Naive thymus-derived CD4-positive, alpha-beta T cell (primary cell): ENCODE measurements at regions of chr11 and their contacts with region 1.

Region 1: GRCh38 chr11:106087815-106088435 is 10.5 kb downstream of the AASDHPPT start:
- DNase-seq: peak in 8 of 9 donors; percentile 10 to 32 (median 18)
- ATAC-seq: peak; percentile 82
- H3K4me3 ChIP-seq: no peak overlapping the region
- H3K4me3 Mint-ChIP-seq: peak overlapping the region in 6 of 10 donors; percentile 5 to 66 (median 43)
- H3K27ac ChIP-seq: no peak overlapping the region
- H3K27ac Mint-ChIP-seq: peak overlapping the region in 2 of 9 donors; percentile 20 to 26
- H3K4me1 ChIP-seq: peaks cover 9 to 10% of the 10 kb centered on the region in 2 donors
- H3K4me1 Mint-ChIP-seq: peaks cover 32 to 71% (median 58%) of the 10 kb centered on the region in 7 donors
- H3K27me3 ChIP-seq: no peaks in the 10 kb centered on the region
- H3K27me3 Mint-ChIP-seq: no peaks in the 10 kb centered on the region

Region 2: GRCh38 chr11:105799728-105800462 is 288.0 kb before region 1 on chr11:
- CTCF ChIA-PET with region 1: no interaction called
- POLR2A ChIA-PET with region 1: no interaction called
- intact Hi-C with region 1: no loop called
- DNase-seq: no peak
- ATAC-seq: no peak
- H3K4me3 ChIP-seq: no peak overlapping the region
- H3K4me3 Mint-ChIP-seq: no peak overlapping the region
- H3K27ac ChIP-seq: no peak overlapping the region
- H3K27ac Mint-ChIP-seq: no peak overlapping the region
- H3K4me1 ChIP-seq: no peaks in the 10 kb centered on the region
- H3K4me1 Mint-ChIP-seq: no peaks in the 10 kb centered on the region
- H3K27me3 ChIP-seq: no peaks in the 10 kb centered on the region
- H3K27me3 Mint-ChIP-seq: no peaks in the 10 kb centered on the region

Region 3: GRCh38 chr11:106133529-106133928 is 45.6 kb after region 1 on chr11:
- CTCF ChIA-PET with region 1: no interaction called
- POLR2A ChIA-PET with region 1: no interaction called
- intact Hi-C with region 1: no loop called
- DNase-seq: no peak
- ATAC-seq: no peak
- H3K4me3 ChIP-seq: no peak overlapping the region
- H3K4me3 Mint-ChIP-seq: no peak overlapping the region
- H3K27ac ChIP-seq: no peak overlapping the region
- H3K27ac Mint-ChIP-seq: no peak overlapping the region
- H3K4me1 ChIP-seq: no peaks in the 10 kb centered on the region
- H3K4me1 Mint-ChIP-seq: no peaks in the 10 kb centered on the region
- H3K27me3 ChIP-seq: no peaks in the 10 kb centered on the region
- H3K27me3 Mint-ChIP-seq: peaks cover 0 to 49% (median 26%) of the 10 kb centered on the region in 5 donors

Region 4: DNA sequence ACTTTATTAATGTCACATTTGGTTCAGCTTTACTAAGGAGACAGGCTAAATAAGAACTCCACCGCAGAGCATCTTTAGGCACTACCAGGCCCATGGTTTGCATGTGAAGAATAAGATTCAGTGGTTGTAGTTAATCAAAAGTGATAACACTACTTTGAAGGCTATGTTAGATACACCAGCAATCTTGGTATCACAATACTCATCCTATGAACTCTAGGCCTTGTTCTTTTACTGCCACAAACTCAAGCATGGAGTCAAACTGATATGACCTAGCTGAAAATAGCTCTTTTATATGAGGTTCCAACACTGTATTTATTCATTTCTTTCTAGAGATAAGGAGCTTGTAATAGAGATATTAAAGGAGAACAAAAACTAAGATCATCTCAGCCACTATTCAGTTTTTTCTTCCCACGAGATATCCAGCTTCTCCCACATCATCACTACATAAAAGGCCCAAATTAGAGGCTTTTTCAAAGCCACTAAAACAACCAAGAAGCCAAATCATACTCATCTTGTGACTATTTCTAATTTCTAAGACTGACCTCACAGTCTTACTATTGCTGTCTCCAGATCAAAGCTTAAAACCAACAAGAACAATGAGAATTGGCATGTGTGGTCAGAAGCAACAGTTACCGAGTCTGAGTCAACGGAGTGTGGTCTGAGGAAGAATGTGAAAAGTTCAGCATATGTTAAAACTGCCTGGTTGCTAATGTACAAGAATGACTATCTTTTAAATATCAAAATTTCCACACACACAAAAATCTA is 955.5 kb after region 1 on chr11:
- CTCF ChIA-PET with region 1: no interaction called
- POLR2A ChIA-PET with region 1: no interaction called
- intact Hi-C with region 1: loop called in 1 of 2 experiments (anchors 5 kb)
- DNase-seq: no peak
- ATAC-seq: no peak
- H3K4me3 ChIP-seq: no peak overlapping the region
- H3K4me3 Mint-ChIP-seq: no peak overlapping the region
- H3K27ac ChIP-seq: no peak overlapping the region
- H3K27ac Mint-ChIP-seq: no peak overlapping the region
- H3K4me1 ChIP-seq: no peaks in the 10 kb centered on the region
- H3K4me1 Mint-ChIP-seq: no peaks in the 10 kb centered on the region
- H3K27me3 ChIP-seq: no peaks in the 10 kb centered on the region
- H3K27me3 Mint-ChIP-seq: no peaks in the 10 kb centered on the region

Region 5: DNA sequence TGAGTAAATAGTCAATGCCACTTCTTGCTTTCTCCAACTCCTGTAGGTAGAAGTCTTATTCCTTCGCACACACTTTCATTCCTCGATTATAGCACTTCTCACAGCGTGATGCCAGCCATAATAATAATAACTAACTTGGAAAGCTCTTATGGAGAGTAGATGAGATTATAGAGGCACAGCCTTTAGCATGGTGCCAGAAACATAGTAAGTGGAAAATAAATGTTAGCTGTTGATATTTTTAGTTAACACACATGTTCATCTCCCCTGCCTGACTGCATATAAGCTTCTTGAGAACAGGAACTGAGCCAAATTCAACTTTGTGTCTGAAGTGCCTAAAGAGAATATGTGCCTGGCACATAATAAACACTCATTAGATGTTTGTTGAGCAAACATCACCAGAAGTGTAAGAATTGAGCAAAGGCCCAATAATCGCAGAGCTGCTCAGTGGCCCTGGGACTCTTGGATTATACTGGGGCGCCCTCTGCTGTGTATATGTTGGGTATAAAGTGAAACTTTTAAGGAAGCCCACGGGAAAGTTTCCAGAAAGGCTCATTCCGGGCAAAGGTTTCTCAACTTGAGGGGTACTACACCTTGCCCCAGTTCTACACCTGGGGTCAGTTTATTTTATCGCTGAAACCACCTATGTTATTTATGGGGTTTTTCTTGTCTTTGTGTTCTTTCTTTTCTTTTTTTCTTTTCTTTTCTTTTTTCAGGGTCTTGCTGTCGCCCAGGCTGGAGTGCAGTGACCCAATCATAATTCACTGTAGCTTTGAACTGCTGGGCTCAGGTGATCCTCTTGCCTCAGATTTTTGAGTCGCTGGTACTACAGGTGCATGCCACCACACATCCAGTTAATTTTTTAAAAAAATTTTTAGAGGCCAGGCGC is 1601.6 kb after region 1 on chr11:
- CTCF ChIA-PET with region 1: no interaction called
- POLR2A ChIA-PET with region 1: no interaction called
- intact Hi-C with region 1: loop called in 1 of 2 experiments (anchors 5 kb)
- DNase-seq: peak; percentile 7 to 51 (median 45)
- ATAC-seq: peak; percentile 84
- H3K4me3 ChIP-seq: no peak overlapping the region
- H3K4me3 Mint-ChIP-seq: no peak overlapping the region
- H3K27ac ChIP-seq: no peak overlapping the region
- H3K27ac Mint-ChIP-seq: no peak overlapping the region
- H3K4me1 ChIP-seq: no peaks in the 10 kb centered on the region
- H3K4me1 Mint-ChIP-seq: peaks cover 0 to 5% (median 0%) of the 10 kb centered on the region in 7 donors
- H3K27me3 ChIP-seq: no peaks in the 10 kb centered on the region
- H3K27me3 Mint-ChIP-seq: peaks cover 12 to 26% (median 20%) of the 10 kb centered on the region in 5 donors